Endothelial cell of umbilical vein (primary cell): ENCODE measurements at regions of chr14 and their contacts with region 1.

Region 1: DNA sequence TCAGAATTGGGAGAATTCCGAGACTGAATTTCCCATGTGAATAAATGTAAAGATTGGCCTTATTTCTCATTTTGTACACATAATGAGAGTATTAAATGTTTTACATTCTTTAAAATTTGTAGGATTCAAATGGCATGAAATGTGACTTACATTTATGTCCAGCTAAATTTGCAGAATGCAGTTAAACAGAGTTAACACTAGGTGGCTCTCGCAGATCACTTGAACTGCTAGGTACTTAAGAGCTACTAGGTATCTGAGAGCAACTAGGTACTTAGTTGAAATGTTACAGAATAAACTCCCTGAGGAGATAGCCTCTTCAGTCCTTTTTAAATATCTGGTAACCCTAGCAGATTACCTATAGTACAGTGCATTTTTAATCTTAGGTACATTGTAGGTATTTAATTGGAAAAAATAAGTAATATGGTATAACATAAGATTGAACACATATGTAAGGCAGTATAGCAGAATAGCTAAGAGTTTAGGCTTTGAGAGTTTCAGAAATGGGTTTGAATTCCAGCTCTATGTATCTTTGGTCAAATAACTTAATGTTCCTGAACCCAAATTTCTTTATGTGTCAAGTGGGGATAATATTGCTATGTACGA is 73.8 kb downstream of the KIAA0586 start:
- DNase-seq: peak; percentile 67
- H3K4me3 ChIP-seq: no peak overlapping the region
- H3K27ac ChIP-seq: no peak overlapping the region
- H3K4me1 ChIP-seq: no peaks in the 10 kb centered on the region
- H3K27me3 ChIP-seq: no peaks in the 10 kb centered on the region
- CTCF ChIP-seq: peak; percentile 64 to 67
- POLR2A ChIP-seq: no peak

Region 2: DNA sequence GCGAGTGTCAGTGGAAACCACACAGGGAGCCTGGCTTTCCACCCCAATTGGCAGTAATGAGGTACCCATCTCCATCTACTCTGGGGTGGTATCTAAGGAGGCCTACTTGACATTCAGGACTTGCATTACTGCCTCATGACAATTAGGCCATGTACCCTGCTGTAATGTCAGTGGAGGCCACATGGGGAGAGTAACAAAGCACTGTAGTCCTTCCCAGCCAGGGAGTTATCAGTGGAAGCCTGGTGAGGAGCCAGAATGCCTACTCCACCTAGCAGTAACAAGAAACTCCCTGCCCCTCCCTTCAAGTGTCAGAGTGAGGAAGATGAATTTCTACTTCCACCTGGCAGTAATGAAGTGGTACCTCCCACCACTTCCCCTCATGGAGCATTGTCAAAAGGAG is 86.5 kb before region 1 on chr14:
- CTCF ChIA-PET with region 1: no interaction called
- POLR2A ChIA-PET with region 1: no interaction called
- dilution Hi-C with region 1: no loop called
- intact Hi-C with region 1: no loop called
- DNase-seq: no peak
- H3K4me3 ChIP-seq: no peak overlapping the region
- H3K27ac ChIP-seq: no peak overlapping the region
- H3K4me1 ChIP-seq: no peaks in the 10 kb centered on the region
- H3K27me3 ChIP-seq: no peaks in the 10 kb centered on the region
- CTCF ChIP-seq: no peak
- POLR2A ChIP-seq: no peak

Region 3: DNA sequence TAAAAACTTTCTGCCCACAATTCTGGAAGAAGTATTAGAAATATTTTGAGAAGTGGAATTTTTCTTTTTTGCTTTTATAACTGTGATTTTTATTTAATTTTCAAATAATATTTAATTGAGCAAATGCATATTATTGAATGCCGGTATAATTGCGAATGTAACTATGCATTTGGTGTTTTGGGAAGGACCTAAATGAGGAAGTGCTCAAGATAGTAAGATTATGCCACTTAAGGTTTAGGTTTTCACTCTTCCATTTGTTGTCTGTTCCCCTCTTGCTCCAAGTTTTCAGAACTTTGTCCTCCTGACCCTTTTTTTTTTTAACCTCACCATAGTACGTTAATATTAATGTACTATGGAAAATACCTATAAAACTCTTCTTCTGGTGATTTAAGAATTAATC is 12.0 kb after region 1 on chr14:
- CTCF ChIA-PET with region 1: interaction called, 35 read pairs
- POLR2A ChIA-PET with region 1: no interaction called
- dilution Hi-C with region 1: no loop called
- intact Hi-C with region 1: no loop called
- DNase-seq: no peak
- H3K4me3 ChIP-seq: no peak overlapping the region
- H3K27ac ChIP-seq: no peak overlapping the region
- H3K4me1 ChIP-seq: peaks cover 3% of the 10 kb centered on the region
- H3K27me3 ChIP-seq: no peaks in the 10 kb centered on the region
- CTCF ChIP-seq: no peak
- POLR2A ChIP-seq: no peak

Region 4: DNA sequence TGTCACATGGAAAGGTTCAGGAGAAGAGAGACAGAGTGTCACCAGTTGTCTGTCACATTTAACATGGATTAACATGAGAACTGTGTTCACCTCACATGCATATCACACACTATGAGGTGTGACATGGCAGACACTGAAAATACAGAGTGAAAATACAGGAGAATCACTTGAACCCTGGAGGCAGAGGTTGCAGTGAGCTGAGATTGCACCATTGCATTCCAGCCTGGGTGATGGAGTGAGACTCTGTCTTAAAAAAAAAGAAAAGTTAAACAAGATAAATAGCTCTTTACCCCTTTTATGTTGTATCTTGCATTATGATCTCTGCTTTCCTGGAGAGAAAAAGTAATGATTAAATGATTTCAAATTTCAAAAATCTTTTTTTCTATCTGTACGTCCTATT is 113.7 kb after region 1 on chr14:
- CTCF ChIA-PET with region 1: interaction called, 11 read pairs
- POLR2A ChIA-PET with region 1: no interaction called
- dilution Hi-C with region 1: no loop called
- intact Hi-C with region 1: no loop called
- DNase-seq: no peak
- H3K4me3 ChIP-seq: no peak overlapping the region
- H3K27ac ChIP-seq: no peak overlapping the region
- H3K4me1 ChIP-seq: no peaks in the 10 kb centered on the region
- H3K27me3 ChIP-seq: peaks cover 1 to 3% of the 10 kb centered on the region in 2 experiments
- CTCF ChIP-seq: no peak
- POLR2A ChIP-seq: no peak

Region 5: DNA sequence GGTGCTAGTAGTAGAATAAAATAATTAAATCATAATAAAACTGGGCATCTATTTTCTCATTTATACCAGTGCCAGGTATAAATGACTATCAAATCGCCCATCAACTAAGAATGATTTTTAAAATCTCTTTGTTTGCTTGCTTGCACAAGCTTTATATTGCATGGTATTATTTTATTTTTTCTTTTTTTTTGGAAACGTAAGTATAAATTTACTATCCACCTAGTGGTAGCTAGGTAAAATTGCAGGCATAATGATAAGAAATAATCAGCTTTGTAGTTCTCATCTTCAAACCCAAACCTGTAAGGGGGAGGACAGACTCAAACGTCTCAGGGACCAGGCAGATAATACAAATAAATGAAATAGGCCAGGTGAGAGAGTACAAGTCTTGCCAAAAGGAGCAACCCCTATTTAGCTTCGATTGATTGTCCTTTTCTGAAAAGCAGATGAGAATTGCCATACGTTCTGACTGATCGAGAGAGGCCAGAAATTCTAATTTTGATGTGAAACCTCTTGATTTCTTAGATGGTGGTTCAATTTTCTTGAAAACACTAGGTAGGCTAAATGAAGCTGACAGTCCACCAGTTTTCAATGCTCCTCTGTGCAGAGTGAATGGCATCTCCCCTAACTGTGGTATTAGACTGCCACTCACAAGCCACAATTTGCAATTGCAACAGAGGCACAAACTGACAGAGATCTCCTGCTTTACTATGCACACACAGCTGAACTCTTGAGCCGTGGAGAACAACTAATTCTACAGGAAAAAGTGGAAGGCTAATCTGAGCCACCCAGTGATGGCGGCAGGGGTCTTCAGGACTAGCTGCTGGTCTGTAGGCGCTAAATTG is 325.8 kb after region 1 on chr14:
- CTCF ChIA-PET with region 1: interaction called, 11 read pairs
- POLR2A ChIA-PET with region 1: no interaction called
- dilution Hi-C with region 1: no loop called
- intact Hi-C with region 1: no loop called
- DNase-seq: no peak
- H3K4me3 ChIP-seq: no peak overlapping the region
- H3K27ac ChIP-seq: no peak overlapping the region
- H3K4me1 ChIP-seq: peaks cover 4% of the 10 kb centered on the region
- H3K27me3 ChIP-seq: no peaks in the 10 kb centered on the region
- CTCF ChIP-seq: no peak
- POLR2A ChIP-seq: no peak

Region 6: DNA sequence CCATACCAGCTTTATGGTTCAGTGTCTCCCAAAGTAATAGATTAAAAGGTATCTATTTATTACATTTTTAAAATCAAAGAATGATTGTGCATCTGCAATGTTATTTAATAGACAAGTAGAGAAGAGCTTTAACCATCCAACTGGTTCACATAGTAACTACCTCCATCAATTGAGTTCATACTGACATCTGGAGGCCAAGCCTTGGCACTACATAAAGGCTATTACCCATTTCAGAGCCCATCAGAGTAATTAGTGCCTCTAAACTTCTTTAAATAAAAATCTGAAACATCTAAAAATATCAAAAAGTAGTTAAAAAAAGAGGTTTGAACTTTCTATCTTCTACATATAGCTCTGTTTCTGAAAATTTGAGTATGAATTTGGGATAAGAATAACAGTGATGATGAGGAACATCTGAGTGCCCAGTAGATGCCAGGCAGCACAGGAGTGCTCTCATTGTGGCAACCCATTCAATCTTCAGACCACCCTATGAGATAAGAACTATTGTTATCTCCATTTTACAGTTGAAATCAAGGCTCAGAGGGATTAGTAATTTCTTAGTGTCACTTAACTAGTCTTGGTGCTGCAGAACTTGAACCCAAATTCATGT is 554.2 kb after region 1 on chr14:
- CTCF ChIA-PET with region 1: interaction called, 60 read pairs
- POLR2A ChIA-PET with region 1: no interaction called
- dilution Hi-C with region 1: no loop called
- intact Hi-C with region 1: no loop called
- DNase-seq: peak; percentile 48
- H3K4me3 ChIP-seq: no peak overlapping the region
- H3K27ac ChIP-seq: no peak overlapping the region
- H3K4me1 ChIP-seq: no peaks in the 10 kb centered on the region
- H3K27me3 ChIP-seq: peaks cover 2 to 5% of the 10 kb centered on the region in 2 experiments
- CTCF ChIP-seq: peak; percentile 15 to 57
- POLR2A ChIP-seq: no peak